IMR-90 (cell line): ENCODE measurements at regions of chr17 and their contacts with region 1.

Region 1: GRCh38 chr17:8409966-8410864 is 12.6 kb upstream of the RNF222 start:
- DNase-seq: peak; percentile 82
- ATAC-seq: peak; percentile 99
- H3K4me3 ChIP-seq: no peak overlapping the region
- H3K27ac ChIP-seq: no peak overlapping the region
- H3K4me1 ChIP-seq: no peaks in the 10 kb centered on the region
- H3K27me3 ChIP-seq: peaks cover 11% of the 10 kb centered on the region
- CTCF ChIP-seq: peak; percentile 86
- POLR2A ChIP-seq: no peak
- RAD21 ChIP-seq: peak; percentile 76

Region 2: GRCh38 chr17:8420041-8420934 is 10.1 kb after region 1 on chr17:
- CTCF ChIA-PET with region 1: interaction called, 10 read pairs
- POLR2A ChIA-PET with region 1: no interaction called
- dilution Hi-C with region 1: no loop called
- in situ Hi-C with region 1: no loop called
- intact Hi-C with region 1: no loop called
- DNase-seq: peak; percentile 52
- ATAC-seq: peak; percentile 71
- H3K4me3 ChIP-seq: no peak overlapping the region
- H3K27ac ChIP-seq: no peak overlapping the region
- H3K4me1 ChIP-seq: peaks cover 2% of the 10 kb centered on the region; the same call in 1 of the 2 replicates
- H3K27me3 ChIP-seq: peaks cover 15% of the 10 kb centered on the region
- CTCF ChIP-seq: no peak
- POLR2A ChIP-seq: no peak
- RAD21 ChIP-seq: no peak

Region 3: GRCh38 chr17:8488901-8489300 is 78.7 kb after region 1 on chr17:
- CTCF ChIA-PET with region 1: no interaction called
- POLR2A ChIA-PET with region 1: no interaction called
- dilution Hi-C with region 1: no loop called
- in situ Hi-C with region 1: no loop called
- intact Hi-C with region 1: no loop called
- DNase-seq: peak; percentile 98
- ATAC-seq: peak; percentile 98
- H3K4me3 ChIP-seq: no peak overlapping the region
- H3K27ac ChIP-seq: peak overlapping the region; percentile 3; the same call in 1 of the 2 replicates
- H3K4me1 ChIP-seq: peaks cover 2% of the 10 kb centered on the region; the same call in 1 of the 2 replicates
- H3K27me3 ChIP-seq: no peaks in the 10 kb centered on the region
- CTCF ChIP-seq: 0 out of 2 replicates have a peak, but pooled peaks have one; percentile 16
- POLR2A ChIP-seq: no peak
- RAD21 ChIP-seq: peak; percentile 31; the same call in 1 of the 2 replicates